WTC11 (cell line): ENCODE measurements at regions of chr13 and their contacts with region 1.

Region 1: GRCh38 chr13:112931028-112931934 is 37.7 kb upstream of the MCF2L start:
- DNase-seq: peak; percentile 50
- ATAC-seq: peak; percentile 83
- H3K4me3 Mint-ChIP-seq: no peak overlapping the region
- H3K27ac Mint-ChIP-seq: peak overlapping the region; percentile 86; the same call in 1 of the 2 replicates
- H3K4me1 Mint-ChIP-seq: peaks cover 22% of the 10 kb centered on the region
- H3K27me3 Mint-ChIP-seq: no peaks in the 10 kb centered on the region
- CTCF ChIP-seq: no peak

Region 2: DNA sequence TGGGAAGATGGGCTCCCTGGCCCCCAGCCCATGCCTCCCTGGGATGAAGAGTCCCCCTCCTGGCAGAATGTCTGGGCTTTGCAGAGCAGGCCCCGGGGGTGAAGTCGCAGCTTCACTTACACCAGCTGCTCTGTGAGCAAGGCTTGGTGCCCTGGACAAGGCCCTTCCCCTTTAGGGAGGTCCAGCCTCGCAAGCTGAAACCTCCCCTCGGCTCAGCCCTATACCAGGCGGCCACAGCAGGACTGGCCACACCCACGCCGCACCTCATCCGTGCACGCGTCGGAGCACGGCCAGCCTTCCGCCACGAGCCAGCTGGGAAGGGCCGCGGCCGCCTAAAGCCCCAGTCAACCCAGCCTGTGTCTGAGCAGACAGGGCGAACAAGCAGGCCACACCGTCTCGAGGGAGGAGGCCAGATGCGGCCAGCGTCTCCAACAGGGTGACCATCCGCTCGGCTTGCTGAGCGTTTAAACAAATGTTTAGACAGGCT is 45.5 kb before region 1 on chr13:
- CTCF ChIA-PET with region 1: interaction called, 12 read pairs
- POLR2A ChIA-PET with region 1: no interaction called
- DNase-seq: peak; percentile 83
- ATAC-seq: peak; percentile 95
- H3K4me3 Mint-ChIP-seq: peak overlapping the region; percentile 29
- H3K27ac Mint-ChIP-seq: no peak overlapping the region
- H3K4me1 Mint-ChIP-seq: peaks cover 17% of the 10 kb centered on the region
- H3K27me3 Mint-ChIP-seq: peaks cover 13% of the 10 kb centered on the region
- CTCF ChIP-seq: no peak